HCT116 (cell line): ENCODE measurements at regions of chr19 and their contacts with region 1.

Region 1: DNA sequence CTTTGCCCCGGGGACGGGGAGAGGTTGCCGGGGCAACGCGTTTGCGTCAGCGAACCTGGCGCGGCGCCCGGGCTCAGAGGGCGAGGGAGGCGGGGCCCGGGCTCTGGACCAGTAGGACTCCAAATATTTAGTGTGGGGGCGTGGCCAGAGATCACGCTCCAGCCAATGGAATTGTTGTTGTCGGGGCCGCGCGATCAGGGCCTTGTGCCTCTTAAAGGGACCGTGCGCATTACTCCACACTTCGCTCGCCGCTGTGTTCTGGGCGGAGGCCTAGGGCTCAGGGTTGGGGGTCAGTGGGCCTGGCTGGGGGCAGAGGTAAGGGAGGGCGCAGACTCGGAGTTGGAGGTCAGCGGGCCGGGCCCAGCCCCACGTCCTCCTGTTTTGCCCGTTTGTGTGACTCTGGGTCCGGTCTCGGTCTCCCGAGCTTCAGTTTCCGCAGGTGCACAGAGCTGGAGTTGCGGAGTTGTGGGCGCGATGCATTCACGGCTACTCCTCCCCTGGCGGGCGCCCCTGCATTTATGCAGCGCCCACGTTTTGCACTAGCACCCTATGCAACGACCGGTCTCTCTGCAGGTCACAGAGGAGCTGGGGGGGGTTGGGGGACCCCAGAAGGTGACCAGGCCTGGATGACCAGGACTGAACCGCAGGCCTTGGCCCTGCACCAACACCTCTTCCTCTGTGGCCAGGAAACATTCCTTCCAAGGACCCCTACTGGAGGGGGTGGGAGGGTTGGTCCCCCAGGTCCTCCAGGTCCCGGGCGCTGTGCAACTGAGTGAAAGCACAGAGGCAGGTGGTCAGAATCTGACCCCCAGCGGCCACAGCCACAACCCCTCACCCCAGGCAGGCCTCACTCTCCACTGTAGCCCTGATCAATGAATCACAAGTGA is 10.7 kb upstream of the MKNK2 start:
- DNase-seq: peak; percentile 93
- ATAC-seq: peak; percentile 78
- H3K4me3 ChIP-seq: peak overlapping the region; percentile 71 to 81
- H3K27ac ChIP-seq: peak overlapping the region; percentile 99
- H3K4me1 ChIP-seq: peaks cover 56 to 74% of the 10 kb centered on the region in 2 experiments
- H3K27me3 ChIP-seq: no peaks in the 10 kb centered on the region
- CTCF ChIP-seq: no peak
- POLR2A ChIP-seq: peak; percentile 56
- RAD21 ChIP-seq: no peak

Region 2: GRCh38 chr19:1875646-1876495 is 185.9 kb before region 1 on chr19:
- CTCF ChIA-PET with region 1: no interaction called
- POLR2A ChIA-PET with region 1: no interaction called
- RAD21 ChIA-PET with region 1: no interaction called
- intact Hi-C with region 1: no loop called
- DNase-seq: peak; percentile 68
- ATAC-seq: peak; percentile 96
- H3K4me3 ChIP-seq: peak overlapping the region; percentile 76 to 95
- H3K27ac ChIP-seq: peak overlapping the region; percentile 95
- H3K4me1 ChIP-seq: peaks cover 12 to 20% of the 10 kb centered on the region in 2 experiments
- H3K27me3 ChIP-seq: no peaks in the 10 kb centered on the region
- CTCF ChIP-seq: peak in 1 of 3 experiments; percentile 14; a peak in 1 of 6 replicates
- POLR2A ChIP-seq: peak; percentile 69
- RAD21 ChIP-seq: no peak

Region 3: DNA sequence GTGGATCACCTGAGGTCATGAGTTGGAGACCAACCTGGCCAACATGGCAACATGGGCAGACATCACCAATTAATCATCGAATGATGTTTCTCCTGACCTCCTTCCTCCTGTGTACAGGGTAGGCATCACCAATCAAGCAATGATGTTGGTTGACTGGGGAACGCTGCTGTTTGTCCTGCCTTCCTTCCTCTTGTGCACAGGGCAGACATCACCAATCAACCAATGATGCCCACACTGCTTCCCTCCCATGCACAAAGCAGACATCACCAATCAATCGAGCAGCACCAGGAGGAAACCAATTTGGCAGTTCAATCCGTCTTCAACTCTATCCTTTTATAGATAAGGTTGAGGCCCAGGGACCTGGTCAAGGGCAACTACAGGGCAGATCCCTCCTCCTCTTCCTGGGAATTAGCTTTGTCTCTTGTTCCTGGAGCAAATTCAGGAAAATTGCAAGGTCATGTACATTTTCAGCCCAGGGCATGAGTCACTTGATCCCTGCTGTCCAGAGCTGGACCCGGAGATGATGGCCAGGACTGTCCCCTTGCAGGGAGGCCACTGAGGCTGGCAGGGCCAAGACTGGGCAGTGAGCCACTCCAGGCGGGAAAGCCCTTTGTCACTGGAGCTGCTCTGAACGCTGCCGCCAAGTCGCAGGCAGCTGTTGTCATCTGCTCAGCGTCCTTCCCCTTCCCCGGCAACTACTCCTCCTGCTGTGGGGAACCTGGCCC is 126.1 kb before region 1 on chr19:
- CTCF ChIA-PET with region 1: no interaction called
- POLR2A ChIA-PET with region 1: interaction called, 3 read pairs
- RAD21 ChIA-PET with region 1: no interaction called
- intact Hi-C with region 1: loop called (anchors 10 kb)
- DNase-seq: peak; percentile 68
- ATAC-seq: peak; percentile 62
- H3K4me3 ChIP-seq: no peak overlapping the region
- H3K27ac ChIP-seq: no peak overlapping the region
- H3K4me1 ChIP-seq: peaks cover 9 to 20% of the 10 kb centered on the region in 2 experiments
- H3K27me3 ChIP-seq: no peaks in the 10 kb centered on the region
- CTCF ChIP-seq: no peak
- POLR2A ChIP-seq: no peak
- RAD21 ChIP-seq: no peak

Region 4: DNA sequence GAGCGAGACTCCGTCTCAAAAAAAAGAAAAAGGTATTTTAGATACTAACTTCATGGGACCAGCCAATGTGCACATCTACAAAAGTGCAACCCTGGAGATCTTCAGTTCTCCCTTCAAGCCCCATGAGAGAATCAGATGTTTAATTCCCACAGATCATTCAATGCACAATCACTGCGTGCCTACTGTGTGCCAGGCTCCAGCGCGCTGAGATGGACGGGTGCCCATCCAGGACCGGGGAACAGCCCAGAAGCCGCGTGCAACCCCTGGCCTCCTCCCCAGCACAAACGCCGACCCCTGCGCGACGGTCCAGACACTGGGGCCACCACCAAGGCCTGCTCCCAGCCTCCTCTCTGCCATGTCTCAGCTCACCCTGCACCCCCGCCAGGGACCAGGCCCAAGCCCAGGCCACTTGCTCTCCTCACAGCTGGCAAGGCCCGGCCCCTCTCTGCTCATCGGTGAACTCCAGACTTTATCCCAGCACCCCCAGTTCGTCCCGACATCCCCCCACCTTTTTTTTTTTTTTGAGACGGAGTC is 51.5 kb before region 1 on chr19:
- CTCF ChIA-PET with region 1: no interaction called
- POLR2A ChIA-PET with region 1: no interaction called
- RAD21 ChIA-PET with region 1: no interaction called
- intact Hi-C with region 1: no loop called
- DNase-seq: no peak
- ATAC-seq: no peak
- H3K4me3 ChIP-seq: no peak overlapping the region
- H3K27ac ChIP-seq: no peak overlapping the region
- H3K4me1 ChIP-seq: peaks cover 0 to 10% of the 10 kb centered on the region in 2 experiments; a peak in 1 of 4 replicates
- H3K27me3 ChIP-seq: no peaks in the 10 kb centered on the region
- CTCF ChIP-seq: no peak
- POLR2A ChIP-seq: no peak
- RAD21 ChIP-seq: no peak

Region 5: GRCh38 chr19:2032296-2032941 is 29.3 kb before region 1 on chr19:
- CTCF ChIA-PET with region 1: interaction called, 3 read pairs
- POLR2A ChIA-PET with region 1: interaction called, 11 read pairs
- RAD21 ChIA-PET with region 1: no interaction called
- intact Hi-C with region 1: no loop called
- DNase-seq: peak; percentile 84
- ATAC-seq: peak; percentile 64
- H3K4me3 ChIP-seq: peak overlapping the region; percentile 36 to 57
- H3K27ac ChIP-seq: peak overlapping the region; percentile 93
- H3K4me1 ChIP-seq: peaks cover 62 to 82% of the 10 kb centered on the region in 2 experiments
- H3K27me3 ChIP-seq: no peaks in the 10 kb centered on the region
- CTCF ChIP-seq: no peak
- POLR2A ChIP-seq: no peak
- RAD21 ChIP-seq: no peak

Region 6: GRCh38 chr19:2050991-2051772 is 10.6 kb before region 1 on chr19 and contains the start of gene MKNK2:
- CTCF ChIA-PET with region 1: no interaction called
- POLR2A ChIA-PET with region 1: interaction called, 17 read pairs
- RAD21 ChIA-PET with region 1: no interaction called
- intact Hi-C with region 1: no loop called
- DNase-seq: no peak
- ATAC-seq: peak; percentile 72
- H3K4me3 ChIP-seq: peak within 1 kb of the TSS; percentile 92
- H3K27ac ChIP-seq: peak within 1 kb of the TSS; percentile 85
- H3K4me1 ChIP-seq: peaks cover 73 to 89% of the 10 kb centered on the region in 2 experiments
- H3K27me3 ChIP-seq: no peaks in the 10 kb centered on the region
- CTCF ChIP-seq: peak in 1 of 3 experiments; percentile 54; a peak in 3 of 6 replicates
- POLR2A ChIP-seq: peak; percentile 99
- RAD21 ChIP-seq: no peak
- total RNA-seq, gene MKNK2: 271 TPM

Region 7: DNA sequence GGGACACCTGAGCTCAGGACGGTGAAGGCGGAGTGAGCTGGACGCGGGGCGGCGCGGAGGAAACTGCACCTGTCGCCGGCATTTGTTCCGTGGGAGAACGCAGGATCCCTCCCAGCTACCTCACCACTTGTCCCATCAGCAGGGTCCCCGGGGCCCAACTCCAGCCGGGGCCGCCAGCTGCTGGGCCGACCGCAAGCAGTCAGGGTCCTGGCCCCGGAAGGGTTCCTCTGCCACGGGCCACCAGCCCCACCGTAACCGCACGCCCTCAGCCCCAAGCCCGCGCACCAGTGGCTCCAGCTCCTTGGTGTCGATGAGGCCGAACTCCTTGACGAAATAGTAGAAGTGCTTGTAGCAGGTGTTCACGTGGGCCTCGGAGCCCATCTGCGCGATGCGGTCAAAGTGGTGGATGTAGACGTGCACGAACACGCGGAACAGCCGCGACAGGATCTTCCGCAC is 14.8 kb after region 1 on chr19:
- CTCF ChIA-PET with region 1: no interaction called
- POLR2A ChIA-PET with region 1: no interaction called
- RAD21 ChIA-PET with region 1: no interaction called
- intact Hi-C with region 1: no loop called
- DNase-seq: no peak
- ATAC-seq: no peak
- H3K4me3 ChIP-seq: no peak overlapping the region
- H3K27ac ChIP-seq: no peak overlapping the region
- H3K4me1 ChIP-seq: peaks cover 3 to 6% of the 10 kb centered on the region in 2 experiments; a peak in 2 of 4 replicates
- H3K27me3 ChIP-seq: no peaks in the 10 kb centered on the region
- CTCF ChIP-seq: no peak
- POLR2A ChIP-seq: no peak
- RAD21 ChIP-seq: no peak

Region 8: GRCh38 chr19:2302319-2303210 is 240.8 kb after region 1 on chr19:
- CTCF ChIA-PET with region 1: no interaction called
- POLR2A ChIA-PET with region 1: no interaction called
- RAD21 ChIA-PET with region 1: no interaction called
- intact Hi-C with region 1: no loop called
- DNase-seq: no peak
- ATAC-seq: no peak
- H3K4me3 ChIP-seq: no peak overlapping the region
- H3K27ac ChIP-seq: no peak overlapping the region
- H3K4me1 ChIP-seq: no peaks in the 10 kb centered on the region
- H3K27me3 ChIP-seq: no peaks in the 10 kb centered on the region
- CTCF ChIP-seq: no peak
- POLR2A ChIP-seq: no peak
- RAD21 ChIP-seq: no peak